Aorta (tissue), 5 donors: ENCODE measurements at regions of chr16 and their contacts with region 1.

Region 1: DNA sequence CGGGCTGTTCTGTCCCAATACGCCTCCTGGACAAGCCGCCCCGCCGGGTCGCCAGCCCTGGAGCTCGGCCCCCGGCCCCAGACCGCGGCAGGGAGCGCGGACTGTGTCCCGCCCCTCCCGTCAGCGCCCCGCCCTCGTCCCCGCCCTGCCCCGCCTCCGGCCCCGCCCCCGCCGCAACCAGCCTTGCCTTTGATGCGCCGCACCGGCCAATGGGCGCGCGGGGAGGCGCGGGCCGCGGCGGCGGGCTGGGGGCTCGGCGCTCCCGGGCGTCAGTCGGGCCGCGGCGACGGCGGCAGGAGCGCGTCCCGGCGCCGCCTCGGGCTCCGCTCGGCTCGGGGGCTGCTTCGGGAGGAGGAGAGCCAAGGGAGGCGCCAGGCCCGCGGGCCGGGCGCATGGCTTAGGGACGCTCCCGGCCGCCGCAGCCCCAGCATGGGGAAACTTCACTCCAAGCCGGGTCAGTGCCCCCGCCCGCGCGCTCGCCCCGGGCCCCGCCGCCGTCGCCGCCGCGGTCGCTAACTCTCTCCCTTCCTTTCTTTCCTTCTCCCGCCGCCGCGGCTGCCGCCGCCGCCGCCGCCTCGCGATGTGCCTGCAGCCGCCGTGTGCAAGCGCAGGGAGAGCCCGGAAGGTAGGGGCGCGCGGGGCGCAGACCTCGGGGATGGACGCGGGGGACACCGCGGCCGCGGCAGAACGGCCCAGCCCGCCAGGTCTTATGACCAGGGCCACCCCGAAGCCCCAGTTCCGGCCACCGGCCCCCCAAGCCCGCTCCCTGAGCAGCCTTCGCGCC is at the start of gene NKD1:
- DNase-seq: peak; percentile 77 to 92
- ATAC-seq: peak; percentile 89
- H3K4me3 ChIP-seq: peak within 1 kb of the TSS; percentile 75 to 98
- H3K27ac ChIP-seq: peak within 1 kb of the TSS; percentile 7 to 79
- H3K4me1 ChIP-seq: no peaks in the 10 kb centered on the region
- H3K27me3 ChIP-seq: no peaks in the 10 kb centered on the region
- total RNA-seq, gene NKD1: 34.4 to 55.2 TPM

Region 2: DNA sequence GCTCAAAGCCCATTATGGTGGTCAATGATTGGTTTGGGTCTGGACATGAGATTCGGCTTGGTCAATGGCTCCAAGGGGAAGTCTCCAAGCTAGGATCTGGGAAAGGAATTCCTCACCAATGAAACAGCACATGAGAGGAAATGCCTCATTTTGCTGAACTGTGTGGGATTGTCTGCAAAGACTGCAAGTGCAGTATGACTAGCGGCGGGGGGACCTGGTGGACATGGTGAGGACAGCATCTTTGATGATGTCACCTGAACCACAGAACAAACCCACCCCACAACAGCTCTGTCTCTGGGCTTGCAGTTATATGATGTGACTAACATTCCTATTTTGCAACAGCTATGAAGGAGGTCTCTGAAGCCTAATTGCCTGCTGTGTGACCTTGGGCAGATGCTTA is 50.7 kb before region 1 on chr16:
- intact Hi-C with region 1: loop called in 1 of 2 experiments (anchors 2 kb)
- DNase-seq: peak in 1 of 2 donors; percentile 68
- ATAC-seq: peak; percentile 38
- H3K4me3 ChIP-seq: no peak overlapping the region
- H3K27ac ChIP-seq: peak overlapping the region; percentile 90 to 99
- H3K4me1 ChIP-seq: peaks cover 6 to 7% of the 10 kb centered on the region in 2 donors
- H3K27me3 ChIP-seq: no peaks in the 10 kb centered on the region

Region 3: DNA sequence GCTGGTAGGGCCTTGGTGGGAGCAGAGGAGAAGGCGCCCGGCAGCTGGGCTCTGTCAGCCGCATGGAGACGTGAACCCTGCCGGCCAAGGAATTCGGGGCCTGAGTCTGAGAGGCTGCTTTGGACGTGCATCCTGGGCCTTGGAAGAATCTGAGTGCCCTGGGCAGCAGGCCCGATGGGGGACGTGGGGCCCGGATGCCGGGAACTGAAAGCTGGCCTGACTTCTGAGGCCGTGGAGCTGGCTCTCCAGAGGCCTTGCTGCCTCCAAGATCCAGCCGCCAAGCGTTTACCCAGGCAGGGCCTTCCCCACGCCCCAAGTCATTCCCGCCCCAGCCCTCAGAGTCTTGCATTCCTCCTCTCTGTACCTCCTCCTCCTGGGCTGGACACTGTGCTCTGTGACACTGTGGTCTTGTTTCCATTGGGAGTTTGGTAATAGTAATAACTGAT is 37.0 kb after region 1 on chr16:
- intact Hi-C with region 1: loop called (anchors 5 kb)
- DNase-seq: peak; percentile 93 to 94
- ATAC-seq: peak; percentile 89
- H3K4me3 ChIP-seq: no peak overlapping the region
- H3K27ac ChIP-seq: peak overlapping the region; percentile 63 to 96
- H3K4me1 ChIP-seq: peaks cover 9 to 19% of the 10 kb centered on the region in 2 donors
- H3K27me3 ChIP-seq: no peaks in the 10 kb centered on the region

Region 4: DNA sequence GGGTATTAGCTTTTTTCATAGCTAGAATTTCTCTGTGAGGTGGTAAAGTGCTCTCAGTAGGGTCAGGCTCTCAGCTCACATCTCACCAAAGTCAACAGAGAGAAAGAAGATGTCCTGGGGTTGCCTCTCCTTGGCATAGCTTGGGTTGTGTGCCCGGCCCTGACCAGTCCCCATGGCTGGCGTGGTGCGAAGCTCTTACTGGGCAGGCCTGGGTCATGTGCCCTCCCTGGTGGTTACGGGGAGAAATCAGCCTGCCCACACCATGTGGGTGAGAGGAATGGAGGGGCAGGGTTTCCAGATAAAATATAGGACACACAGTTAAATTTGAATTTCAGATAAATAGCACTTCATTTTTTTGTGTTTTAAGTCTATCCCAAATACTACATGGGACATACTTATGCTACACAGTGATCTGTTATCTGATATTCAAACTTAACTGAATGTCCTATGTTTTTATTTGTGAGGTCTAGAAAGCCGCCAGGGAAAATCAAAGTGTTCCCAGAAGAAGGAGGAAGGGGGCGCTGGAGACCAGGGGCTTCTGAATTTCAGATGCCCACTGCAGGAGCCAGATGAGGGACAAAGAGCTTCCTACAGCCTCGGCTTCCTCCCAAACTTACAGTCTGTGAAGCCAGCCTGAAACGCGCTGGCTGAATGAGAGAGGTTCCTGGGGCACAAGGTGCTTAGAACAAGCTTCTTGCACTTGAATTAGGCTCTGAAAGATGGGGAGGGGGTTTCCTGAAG is 45.3 kb after region 1 on chr16:
- intact Hi-C with region 1: loop called (anchors 5 kb)
- DNase-seq: peak in 1 of 2 donors; percentile 53
- ATAC-seq: no peak
- H3K4me3 ChIP-seq: no peak overlapping the region
- H3K27ac ChIP-seq: no peak overlapping the region
- H3K4me1 ChIP-seq: no peaks in the 10 kb centered on the region
- H3K27me3 ChIP-seq: no peaks in the 10 kb centered on the region

Region 5: DNA sequence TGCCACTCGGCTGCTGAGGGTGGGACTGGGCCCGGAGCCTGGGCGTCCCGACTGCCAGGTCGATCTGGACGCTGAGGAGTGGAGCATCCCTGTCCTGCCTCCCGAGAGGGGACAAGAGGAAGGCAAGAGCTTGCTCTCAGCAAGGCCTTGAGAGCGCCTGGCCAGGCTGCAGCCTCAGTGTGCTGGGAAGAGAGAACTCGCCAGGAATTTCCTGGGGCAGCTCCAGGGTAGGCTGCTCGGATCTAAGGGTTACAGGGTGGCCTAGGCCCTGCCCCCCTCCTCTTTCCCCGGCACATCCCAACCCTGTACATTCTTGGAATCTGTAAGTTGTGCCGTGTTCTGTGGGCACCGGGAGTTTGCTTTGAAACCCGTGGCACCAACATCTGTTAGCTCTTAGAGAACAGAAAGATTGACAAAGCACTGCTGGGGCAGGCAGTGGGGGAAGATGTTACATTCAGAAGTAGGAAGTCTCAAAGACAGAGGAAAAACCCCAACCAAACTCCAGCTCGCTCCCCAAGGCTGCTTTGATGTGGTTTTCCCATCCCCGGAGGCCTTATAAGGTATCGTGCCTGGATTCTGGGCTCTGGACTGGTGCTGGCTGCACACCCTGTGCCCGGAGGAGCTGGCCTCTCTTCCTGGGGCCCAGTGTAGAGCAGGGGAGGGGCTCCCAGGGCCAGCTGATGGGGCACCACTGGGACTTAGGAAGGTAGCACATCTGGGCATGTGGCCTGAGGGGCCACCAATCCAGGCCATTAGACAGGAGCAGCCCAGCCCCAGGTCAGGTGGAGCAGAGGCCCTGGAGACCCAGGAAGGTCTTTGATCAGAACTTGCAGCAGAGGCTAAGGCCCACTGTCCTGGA is 55.1 kb after region 1 on chr16:
- intact Hi-C with region 1: loop called in 1 of 2 experiments (anchors 5 kb)
- DNase-seq: peak; percentile 71 to 86
- ATAC-seq: peak; percentile 79
- H3K4me3 ChIP-seq: no peak overlapping the region
- H3K27ac ChIP-seq: peak overlapping the region; percentile 86 to 95
- H3K4me1 ChIP-seq: peaks cover 0 to 5% of the 10 kb centered on the region in 2 donors
- H3K27me3 ChIP-seq: no peaks in the 10 kb centered on the region

Region 6: GRCh38 chr16:50611332-50611934 is 63.1 kb after region 1 on chr16:
- intact Hi-C with region 1: loop called in 1 of 2 experiments (anchors 10 kb)
- DNase-seq: no peak
- ATAC-seq: no peak
- H3K4me3 ChIP-seq: no peak overlapping the region
- H3K27ac ChIP-seq: no peak overlapping the region
- H3K4me1 ChIP-seq: no peaks in the 10 kb centered on the region
- H3K27me3 ChIP-seq: no peaks in the 10 kb centered on the region

Region 7: DNA sequence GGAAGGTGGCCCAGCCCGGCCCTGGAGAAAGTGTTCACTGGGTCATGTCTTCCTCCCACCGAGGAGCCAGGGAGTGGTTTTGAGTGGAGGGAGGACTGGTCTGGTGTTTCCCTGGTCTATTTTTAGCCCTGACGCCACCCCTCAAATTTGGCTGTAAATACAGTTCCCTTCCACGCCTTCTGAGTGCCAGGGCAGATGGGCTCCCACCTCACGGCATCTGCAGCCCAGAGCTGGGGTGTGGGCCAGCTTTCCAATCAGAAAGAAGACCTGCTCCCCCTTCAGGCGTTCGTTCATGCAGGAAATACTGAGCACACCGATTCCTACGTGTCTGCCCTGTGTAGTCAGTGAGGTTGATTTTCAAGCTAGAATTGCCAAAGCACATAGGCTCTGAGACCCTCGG is 79.1 kb after region 1 on chr16:
- intact Hi-C with region 1: loop called in 1 of 2 experiments (anchors 1 kb)
- DNase-seq: peak; percentile 79 to 85
- ATAC-seq: peak; percentile 71
- H3K4me3 ChIP-seq: no peak overlapping the region
- H3K27ac ChIP-seq: no peak overlapping the region
- H3K4me1 ChIP-seq: no peaks in the 10 kb centered on the region
- H3K27me3 ChIP-seq: no peaks in the 10 kb centered on the region